Posterior cingulate gyrus (tissue), 11 donors: ENCODE measurements at regions of chr11 and their contacts with region 1.

Region 1: GRCh38 chr11:43810929-43811596 is 69.6 kb upstream of the ALKBH3 start:
- DNase-seq: peak in 2 of 10 donors; percentile 9 to 72

Region 2: DNA sequence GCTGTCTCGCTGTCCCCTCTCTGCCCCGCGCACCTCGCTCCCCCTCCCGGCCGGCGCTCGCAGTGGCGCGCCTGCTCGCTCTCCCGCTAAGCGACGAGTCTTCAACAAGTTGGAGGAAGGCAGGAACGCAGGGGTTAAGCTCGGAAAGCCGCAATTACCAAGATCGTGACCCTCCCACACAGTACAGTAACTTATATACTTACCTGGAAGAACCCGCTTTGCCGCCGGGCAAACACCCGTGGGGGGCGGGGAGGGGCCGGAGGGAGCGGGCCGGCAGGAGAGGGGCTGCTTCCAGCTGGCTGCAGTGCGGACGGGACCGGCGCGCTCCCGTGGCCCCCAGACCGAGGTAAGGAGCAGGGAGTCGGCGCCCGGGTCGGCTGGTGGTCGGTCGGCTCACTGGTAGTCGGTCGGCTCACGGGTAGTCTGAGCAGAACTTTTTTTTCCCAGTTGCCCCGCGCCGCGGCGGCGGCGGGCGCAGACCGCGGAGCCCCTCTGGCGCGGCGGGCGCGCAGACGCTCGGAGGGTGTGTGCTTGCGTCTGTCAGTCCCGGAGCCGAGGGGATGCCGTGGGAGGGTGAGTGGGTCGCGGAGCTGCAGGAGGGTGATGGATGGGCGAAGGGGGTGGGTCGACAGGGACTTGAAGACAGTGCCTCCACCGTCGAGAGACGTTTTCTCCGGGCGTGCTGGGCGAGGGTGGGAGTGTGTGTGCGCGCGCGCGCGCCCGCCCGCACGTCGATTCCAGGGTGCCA is 231.7 kb before region 1 on chr11:
- intact Hi-C with region 1: loop called (anchors 10 kb)
- DNase-seq: peak in 5 of 10 donors; percentile 28 to 84 (median 76)